CD4-positive, alpha-beta memory T cell (primary cell): ENCODE measurements at regions of chr6 and their contacts with region 1.

Region 1: DNA sequence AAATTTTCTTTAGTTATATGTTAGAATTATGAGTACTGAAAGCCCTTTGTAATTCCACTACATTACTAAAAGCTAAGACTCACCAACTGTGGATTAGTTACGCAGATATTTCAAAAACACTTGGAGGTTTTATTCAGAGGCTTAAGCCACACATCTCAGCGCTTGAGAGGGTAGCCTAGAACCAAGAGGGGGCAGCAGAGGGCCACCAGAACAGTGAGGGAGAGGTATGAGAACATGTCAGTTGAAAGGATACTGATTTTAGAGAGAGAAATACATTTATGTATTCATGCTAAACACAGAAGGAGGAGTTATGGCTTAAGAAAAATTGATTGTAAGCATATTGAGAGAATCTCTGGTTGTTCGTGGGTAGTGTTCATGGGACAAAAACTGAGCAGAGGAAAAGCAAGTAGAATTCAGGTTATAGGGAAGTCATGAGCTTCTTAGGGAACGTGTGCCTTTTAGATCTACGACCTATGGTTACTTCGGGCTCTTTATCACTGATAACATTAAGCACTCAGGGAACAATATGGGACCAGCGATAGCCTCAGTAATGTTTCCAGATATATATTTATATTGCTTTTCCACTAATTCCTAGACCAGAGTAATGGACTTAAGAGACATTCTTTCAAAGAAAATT is 20.4 kb upstream of the SERINC1 start:
- DNase-seq: peak; percentile 55 to 66 (median 60)
- H3K4me3 ChIP-seq: no peak overlapping the region
- H3K4me3 Mint-ChIP-seq: no peak overlapping the region
- H3K27ac ChIP-seq: no peak overlapping the region
- H3K27ac Mint-ChIP-seq: no peak overlapping the region
- H3K4me1 ChIP-seq: no peaks in the 10 kb centered on the region
- H3K4me1 Mint-ChIP-seq: peaks cover 0 to 6% (median 3%) of the 10 kb centered on the region in 4 donors
- H3K27me3 ChIP-seq: no peaks in the 10 kb centered on the region
- H3K27me3 Mint-ChIP-seq: peaks cover 2% of the 10 kb centered on the region in 2 donors

Region 2: DNA sequence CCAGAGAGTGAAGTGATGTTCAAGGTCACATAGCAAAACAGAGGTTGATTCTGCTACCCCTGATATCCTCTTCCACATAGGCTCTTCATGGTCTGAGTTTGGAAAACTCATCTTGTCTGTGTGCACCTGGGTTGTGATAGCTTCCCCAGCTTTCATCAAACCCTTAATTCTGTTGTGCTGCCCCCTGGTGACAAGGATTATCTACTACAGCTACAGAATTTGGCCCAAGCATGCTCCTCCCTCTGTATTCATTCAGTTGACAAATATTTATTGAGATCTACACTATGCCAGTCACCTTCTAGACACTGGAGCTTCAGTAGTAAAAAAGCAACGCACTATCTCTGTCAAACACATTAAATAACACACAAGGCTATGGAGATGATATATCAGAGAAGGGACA is 347.4 kb after region 1 on chr6:
- CTCF ChIA-PET with region 1: interaction called, 3 read pairs
- POLR2A ChIA-PET with region 1: no interaction called
- intact Hi-C with region 1: loop called (anchors 1 kb)
- DNase-seq: peak; percentile 9 to 39 (median 29)
- H3K4me3 ChIP-seq: no peak overlapping the region
- H3K4me3 Mint-ChIP-seq: no peak overlapping the region
- H3K27ac ChIP-seq: no peak overlapping the region
- H3K27ac Mint-ChIP-seq: no peak overlapping the region
- H3K4me1 ChIP-seq: no peaks in the 10 kb centered on the region
- H3K4me1 Mint-ChIP-seq: no peaks in the 10 kb centered on the region
- H3K27me3 ChIP-seq: no peaks in the 10 kb centered on the region
- H3K27me3 Mint-ChIP-seq: peaks cover 5% of the 10 kb centered on the region in 2 donors

Region 3: DNA sequence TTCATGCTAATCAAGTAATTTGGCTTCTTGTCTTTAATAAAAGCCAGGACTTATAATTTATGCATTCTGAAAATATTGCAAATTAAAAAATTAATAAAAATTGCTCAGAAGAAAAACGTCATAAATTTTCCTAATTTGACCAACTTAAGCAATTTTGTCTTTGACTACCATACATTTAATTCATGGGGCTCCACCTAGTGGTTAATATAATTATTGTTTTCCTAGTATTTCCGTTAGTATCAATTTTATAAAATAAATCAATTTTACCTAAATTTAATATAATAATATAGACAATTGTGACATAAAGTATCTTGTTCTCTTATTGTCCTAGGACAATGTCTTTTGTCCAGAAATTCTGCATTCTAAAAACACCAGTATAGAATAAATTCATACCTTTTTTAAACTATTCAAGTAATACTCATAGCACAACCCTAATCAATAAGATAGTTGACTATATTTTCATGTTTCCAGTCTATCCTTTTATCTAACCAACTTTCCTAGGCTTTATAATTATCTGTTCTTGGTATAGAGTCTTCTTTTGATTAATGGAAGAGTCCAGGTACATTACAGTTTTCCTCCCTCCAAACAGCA is 824.8 kb after region 1 on chr6:
- CTCF ChIA-PET with region 1: no interaction called
- POLR2A ChIA-PET with region 1: no interaction called
- intact Hi-C with region 1: loop called (anchors 2 kb)
- DNase-seq: peak in 2 of 5 donors; percentile 1 to 5
- H3K4me3 ChIP-seq: no peak overlapping the region
- H3K4me3 Mint-ChIP-seq: no peak overlapping the region
- H3K27ac ChIP-seq: no peak overlapping the region
- H3K27ac Mint-ChIP-seq: no peak overlapping the region
- H3K4me1 ChIP-seq: no peaks in the 10 kb centered on the region
- H3K4me1 Mint-ChIP-seq: no peaks in the 10 kb centered on the region
- H3K27me3 ChIP-seq: no peaks in the 10 kb centered on the region
- H3K27me3 Mint-ChIP-seq: peaks cover 0 to 1% of the 10 kb centered on the region in 2 donors